Ascending aorta (tissue), 2 donors: ENCODE measurements at regions of chr19 and their contacts with region 1.

Region 1: GRCh38 chr19:33143897-33144405 is 12.0 kb downstream of the WDR88 start:
- DNase-seq: peak in 1 of 2 donors; percentile 77
- H3K4me3 ChIP-seq: no peak overlapping the region
- H3K27ac ChIP-seq: no peak overlapping the region
- H3K4me1 ChIP-seq: no peaks in the 10 kb centered on the region
- H3K27me3 ChIP-seq: no peaks in the 10 kb centered on the region
- CTCF ChIP-seq: peak; percentile 84 to 95 (median 93)

Region 2: DNA sequence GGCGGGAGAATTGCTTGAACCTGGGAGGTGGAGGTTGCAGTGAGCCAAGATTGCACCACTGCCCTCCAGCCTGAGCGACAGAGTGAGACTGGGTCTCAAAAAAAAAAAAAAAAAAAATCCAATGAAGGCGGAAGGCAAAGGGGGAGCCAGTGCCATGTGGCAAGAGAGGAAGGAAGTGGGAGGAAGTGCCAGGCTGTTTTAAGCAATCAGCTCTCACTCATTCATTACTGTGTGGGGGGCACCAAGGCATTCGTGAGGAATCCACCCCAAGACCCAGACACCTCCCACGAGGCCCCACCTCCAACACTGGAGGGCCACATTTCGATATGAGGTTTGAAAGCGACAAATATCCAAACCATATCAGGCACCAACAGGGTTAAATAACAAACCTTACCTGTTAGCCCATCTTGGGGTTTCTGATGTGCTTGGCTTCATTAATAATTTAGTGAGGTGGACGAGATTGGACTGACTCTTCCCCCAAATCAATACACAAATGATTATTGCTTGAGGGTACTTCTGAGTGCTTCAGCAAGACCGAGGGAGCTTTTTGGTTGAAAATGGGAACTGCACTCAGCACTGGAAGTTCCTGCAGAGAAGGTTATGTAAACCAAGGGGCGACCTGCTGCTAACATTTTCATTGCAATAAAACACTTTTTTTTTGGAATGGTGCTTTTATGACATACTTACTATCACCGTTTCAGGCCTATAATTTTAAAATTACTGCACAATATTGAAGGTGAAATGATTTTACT is 42.7 kb after region 1 on chr19:
- intact Hi-C with region 1: loop called (anchors 1 kb)
- DNase-seq: no peak
- H3K4me3 ChIP-seq: no peak overlapping the region
- H3K27ac ChIP-seq: no peak overlapping the region
- H3K4me1 ChIP-seq: peaks cover 0 to 5% of the 10 kb centered on the region in 2 donors
- H3K27me3 ChIP-seq: no peaks in the 10 kb centered on the region
- CTCF ChIP-seq: no peak

Region 3: DNA sequence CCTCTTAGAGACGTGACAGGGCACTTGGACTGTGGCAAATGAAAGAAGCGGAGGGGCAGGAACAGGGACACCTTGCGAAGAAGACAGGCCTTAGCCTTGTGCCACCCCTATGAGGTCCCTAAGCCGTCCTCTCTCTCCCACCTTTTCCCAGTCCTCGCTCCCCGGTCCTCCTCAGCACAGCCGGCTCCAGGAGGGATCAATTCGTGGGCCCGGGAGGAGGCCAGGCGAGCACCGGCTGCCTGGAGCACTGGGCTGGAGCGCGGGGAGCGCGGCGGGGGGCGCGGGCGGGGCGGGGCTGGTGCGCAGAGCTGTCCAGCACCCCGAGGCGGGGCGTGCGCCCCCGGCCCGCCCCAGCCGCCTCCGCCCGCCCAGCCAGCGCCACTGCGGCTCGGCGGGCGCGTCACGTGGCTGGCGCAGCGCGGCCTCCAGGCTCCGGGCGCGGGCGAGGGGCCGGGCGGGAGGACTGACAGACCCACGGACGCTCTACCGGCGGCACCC is 50.0 kb after region 1 on chr19 and contains the start of gene LRP3:
- intact Hi-C with region 1: loop called (anchors 2 kb)
- DNase-seq: no peak
- H3K4me3 ChIP-seq: peak within 1 kb of the TSS; percentile 76 to 91
- H3K27ac ChIP-seq: peak within 1 kb of the TSS; percentile 33 to 44
- H3K4me1 ChIP-seq: peaks cover 0 to 10% of the 10 kb centered on the region in 2 donors
- H3K27me3 ChIP-seq: no peaks in the 10 kb centered on the region
- CTCF ChIP-seq: no peak
- total RNA-seq, gene LRP3: 28.8 TPM

Region 4: GRCh38 chr19:33406521-33407139 is 262.7 kb after region 1 on chr19:
- intact Hi-C with region 1: loop called (anchors 10 kb)
- DNase-seq: peak in 1 of 2 donors; percentile 81
- H3K4me3 ChIP-seq: no peak overlapping the region
- H3K27ac ChIP-seq: no peak overlapping the region
- H3K4me1 ChIP-seq: no peaks in the 10 kb centered on the region
- H3K27me3 ChIP-seq: no peaks in the 10 kb centered on the region
- CTCF ChIP-seq: peak; percentile 88 to 96 (median 94)